Right cardiac atrium (tissue), 5 donors: ENCODE measurements at regions of chr11 and their contacts with region 1.

Region 1: GRCh38 chr11:67317205-67317887 is 14.0 kb downstream of the SSH3 start:
- DNase-seq: peak; percentile 96 to 98 (median 98)
- ATAC-seq: peak; percentile 94 to 95
- H3K4me3 ChIP-seq: peak overlapping the region; percentile 47
- H3K27ac ChIP-seq: peak overlapping the region; percentile 72
- H3K4me1 ChIP-seq: no peaks in the 10 kb centered on the region
- H3K27me3 ChIP-seq: no peaks in the 10 kb centered on the region

Region 2: DNA sequence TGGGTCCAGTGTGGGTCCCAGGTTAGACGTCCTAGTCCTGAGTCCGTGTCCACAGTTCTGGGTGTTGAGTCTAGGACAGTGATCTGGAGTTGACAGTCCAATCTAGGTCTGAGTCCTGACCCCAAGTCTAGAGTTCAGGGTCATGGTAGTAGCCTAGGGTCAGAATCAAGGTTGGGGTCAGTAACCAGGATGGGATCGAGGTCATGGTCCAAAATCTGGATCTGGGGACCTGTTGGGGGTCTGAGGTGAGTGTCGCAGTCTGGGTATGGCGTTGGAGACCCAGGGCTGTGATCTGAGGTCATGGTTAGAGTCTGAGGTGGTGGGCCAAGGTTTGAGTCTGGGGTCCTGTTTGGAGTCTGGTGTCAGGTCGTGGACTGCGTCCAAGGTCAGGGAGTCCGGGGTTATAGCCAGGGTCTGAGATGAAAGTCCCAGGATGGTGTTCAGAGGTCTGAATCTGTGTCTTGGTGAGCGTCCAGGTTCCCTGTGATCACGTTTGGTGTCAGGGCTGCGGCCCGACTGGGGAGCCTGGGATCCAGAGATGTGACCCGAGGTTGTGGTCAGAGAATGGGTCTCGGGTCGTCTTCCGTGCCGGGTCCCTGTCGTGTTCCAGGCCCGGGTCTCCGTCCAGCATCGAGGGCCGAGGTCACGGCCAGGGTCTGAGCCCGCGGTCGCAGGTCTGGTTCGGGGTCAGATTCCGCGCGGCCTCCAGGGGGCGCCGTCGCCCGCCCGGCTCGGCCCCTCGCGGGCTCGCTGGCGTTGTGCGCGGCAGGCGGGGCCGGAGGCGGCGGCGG is 51.5 kb before region 1 on chr11:
- intact Hi-C with region 1: loop called (anchors 2 to 5 kb)
- DNase-seq: peak; percentile 82 to 93 (median 92)
- ATAC-seq: peak; percentile 64 to 65
- H3K4me3 ChIP-seq: peak overlapping the region; percentile 93
- H3K27ac ChIP-seq: peak overlapping the region; percentile 46
- H3K4me1 ChIP-seq: peaks cover 10% of the 10 kb centered on the region
- H3K27me3 ChIP-seq: no peaks in the 10 kb centered on the region

Region 3: DNA sequence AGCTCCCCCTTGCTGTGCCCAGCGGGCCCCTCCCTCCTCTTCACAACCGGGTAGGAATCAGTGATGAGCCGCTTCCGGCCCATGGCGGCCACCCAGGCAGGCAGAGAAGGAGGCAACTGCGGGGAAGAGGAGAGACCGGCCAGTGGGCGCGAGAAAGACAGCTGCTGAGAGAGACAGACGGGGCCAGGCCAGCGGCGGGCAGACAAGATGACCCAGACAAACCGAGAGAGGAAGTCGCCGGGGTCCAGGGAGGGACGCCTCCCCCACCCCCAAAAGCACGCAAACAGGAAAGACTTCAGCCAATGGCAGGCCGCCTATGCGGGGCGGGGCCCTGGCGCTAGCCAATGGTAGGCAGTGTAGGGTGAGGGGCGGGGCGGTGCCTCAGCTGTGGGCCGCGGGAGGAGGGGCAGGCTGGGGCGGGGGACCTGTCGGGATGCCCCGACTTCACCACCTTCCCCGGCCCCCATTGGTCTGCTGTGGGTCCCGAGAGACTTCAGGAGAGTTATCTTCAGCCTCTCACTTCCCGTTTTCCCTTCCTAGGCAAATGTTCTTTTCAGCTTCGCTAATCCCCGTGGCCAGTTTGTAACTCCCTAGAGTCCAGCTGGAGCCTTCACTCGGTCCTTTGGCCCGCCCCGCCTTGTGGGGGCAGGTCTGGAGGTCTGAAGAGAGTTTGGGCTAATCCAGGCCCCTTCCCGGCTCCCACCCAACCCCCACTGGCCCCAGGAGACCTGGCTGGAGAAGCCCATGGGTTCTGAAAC is 36.1 kb after region 1 on chr11 and contains the start of gene POLD4:
- intact Hi-C with region 1: no loop called
- DNase-seq: peak; percentile 99 to 100 (median 100)
- ATAC-seq: peak; percentile 91 to 93
- H3K4me3 ChIP-seq: peak within 1 kb of the TSS; percentile 62
- H3K27ac ChIP-seq: peak within 1 kb of the TSS; percentile 97
- H3K4me1 ChIP-seq: peaks cover 29% of the 10 kb centered on the region
- H3K27me3 ChIP-seq: no peaks in the 10 kb centered on the region
- total RNA-seq, gene POLD4: 53.8 to 86.6 (median 65.3) TPM

Region 4: GRCh38 chr11:67613960-67614715 is 296.8 kb after region 1 on chr11:
- intact Hi-C with region 1: no loop called
- DNase-seq: peak; percentile 62 to 88 (median 87)
- ATAC-seq: peak; percentile 10 to 46
- H3K4me3 ChIP-seq: no peak overlapping the region
- H3K27ac ChIP-seq: peak overlapping the region; percentile 22
- H3K4me1 ChIP-seq: no peaks in the 10 kb centered on the region
- H3K27me3 ChIP-seq: no peaks in the 10 kb centered on the region